H1 (cell line): ENCODE measurements at regions of chr6 and their contacts with region 1.

Region 1: DNA sequence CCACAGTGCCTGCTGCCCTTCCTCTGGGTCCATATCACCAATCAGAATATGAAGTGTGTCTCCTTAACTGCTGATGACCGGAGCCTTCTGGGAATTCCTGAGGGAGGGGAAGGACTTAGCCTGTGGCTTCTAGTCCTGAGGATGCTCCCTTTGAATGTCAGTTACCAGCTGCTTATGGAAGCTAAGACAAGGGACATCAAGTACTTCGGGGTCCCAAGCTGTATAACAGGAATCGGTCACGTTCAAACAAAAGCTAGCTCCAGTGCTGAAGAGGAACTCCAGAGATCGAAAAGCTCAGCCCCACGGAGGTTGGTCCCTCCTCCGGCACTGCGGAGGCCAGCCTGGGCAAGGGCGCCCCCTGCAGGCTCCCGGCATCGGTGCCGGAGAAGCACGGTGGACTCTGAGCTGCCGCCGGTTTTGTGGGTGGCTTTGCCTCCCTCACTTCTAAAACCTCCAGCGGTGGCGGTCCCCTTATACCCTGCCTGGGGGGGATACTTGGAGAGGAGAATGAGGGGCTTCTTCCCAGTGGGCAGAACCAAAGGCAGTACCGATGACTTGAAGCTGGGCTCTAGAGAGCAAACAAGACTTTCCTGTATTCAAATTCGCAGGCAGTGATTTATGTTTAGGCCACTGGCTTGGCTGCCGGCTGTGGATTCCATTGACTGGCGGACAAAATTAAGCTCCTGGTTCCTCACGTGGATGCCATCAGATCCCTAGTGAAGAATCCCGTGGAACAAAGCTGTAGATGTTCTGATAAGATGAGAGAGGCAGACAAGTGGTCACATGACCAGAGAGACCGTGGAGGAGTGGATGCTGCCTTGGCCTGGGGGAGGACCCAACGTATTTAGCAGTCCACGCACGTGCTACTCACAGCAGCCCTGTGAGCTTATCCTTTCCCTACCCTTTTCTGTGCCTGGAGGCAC is 16.2 kb upstream of the UBR2 start:
- DNase-seq: peak in 1 of 2 experiments; percentile 97
- H3K4me3 ChIP-seq: peak overlapping the region; percentile 32 to 58 (median 48); a peak in 7 of 8 replicates
- H3K27ac ChIP-seq: no peak overlapping the region
- H3K4me1 ChIP-seq: no peaks in the 10 kb centered on the region; a peak in 2 of 7 replicates
- H3K27me3 ChIP-seq: no peaks in the 10 kb centered on the region
- CTCF ChIP-seq: peak; percentile 95 to 98 (median 97)
- EP300 ChIP-seq: no peak
- POLR2A ChIP-seq: no peak
- RAD21 ChIP-seq: peak; percentile 95 to 97

Region 2: GRCh38 chr6:42260972-42261371 is 286.7 kb before region 1 on chr6:
- CTCF ChIA-PET with region 1: interaction called, 28 read pairs
- POLR2A ChIA-PET with region 1: no interaction called
- DNase-seq: peak in 1 of 2 experiments; percentile 86
- H3K4me3 ChIP-seq: no peak overlapping the region
- H3K27ac ChIP-seq: no peak overlapping the region
- H3K4me1 ChIP-seq: peaks cover 17 to 26% (median 20%) of the 10 kb centered on the region in 4 experiments
- H3K27me3 ChIP-seq: no peaks in the 10 kb centered on the region
- CTCF ChIP-seq: peak; percentile 51 to 79 (median 78)
- EP300 ChIP-seq: no peak
- POLR2A ChIP-seq: no peak
- RAD21 ChIP-seq: peak; percentile 66 to 69

Region 3: DNA sequence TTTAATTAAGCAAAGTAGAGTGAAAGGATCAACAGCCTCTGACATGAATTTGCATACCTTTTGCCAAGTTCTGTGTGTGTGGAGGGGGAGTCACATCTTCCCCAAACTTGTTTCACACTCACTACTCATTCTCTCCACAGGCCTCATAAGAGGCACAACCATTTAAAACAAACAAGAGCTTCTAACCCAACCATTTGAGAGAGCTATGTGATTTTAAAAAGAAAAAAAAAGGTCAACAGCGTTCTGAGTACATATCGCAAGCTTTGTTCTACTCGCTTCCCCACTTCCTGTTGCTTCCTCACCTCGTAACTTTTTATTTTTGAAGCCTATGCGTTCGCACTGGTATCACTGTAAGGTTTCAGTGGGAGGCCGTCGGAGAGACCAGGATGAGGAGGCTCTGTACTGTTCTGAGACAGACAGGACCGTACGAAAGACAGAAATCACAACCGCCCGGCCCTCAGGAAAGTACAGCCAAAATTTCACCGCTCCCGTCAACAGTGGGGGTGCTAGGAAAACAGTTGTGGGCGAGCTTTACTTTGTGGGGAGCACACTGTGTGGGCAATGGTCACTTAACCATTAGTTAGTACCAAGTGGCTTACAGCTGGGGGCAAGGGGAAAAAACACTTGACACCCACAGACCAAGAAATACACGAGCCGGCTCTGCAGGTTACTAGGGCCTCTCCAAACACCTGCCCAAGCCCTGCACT is 157.3 kb before region 1 on chr6:
- CTCF ChIA-PET with region 1: interaction called, 13 read pairs
- POLR2A ChIA-PET with region 1: no interaction called
- DNase-seq: no peak
- H3K4me3 ChIP-seq: no peak overlapping the region
- H3K27ac ChIP-seq: no peak overlapping the region
- H3K4me1 ChIP-seq: peaks cover 3 to 9% (median 8%) of the 10 kb centered on the region in 4 experiments; a peak in 5 of 7 replicates
- H3K27me3 ChIP-seq: no peaks in the 10 kb centered on the region
- CTCF ChIP-seq: no peak
- EP300 ChIP-seq: no peak
- POLR2A ChIP-seq: no peak
- RAD21 ChIP-seq: no peak

Region 4: GRCh38 chr6:42453031-42453653 is 94.5 kb before region 1 on chr6:
- CTCF ChIA-PET with region 1: interaction called, 23 read pairs
- POLR2A ChIA-PET with region 1: interaction called, 15 read pairs
- DNase-seq: peak in 1 of 2 experiments; percentile 91
- H3K4me3 ChIP-seq: peak overlapping the region; percentile 73 to 96 (median 94)
- H3K27ac ChIP-seq: peak overlapping the region; percentile 89; the same call in 1 of the 2 replicates
- H3K4me1 ChIP-seq: peaks cover 0 to 26% (median 14%) of the 10 kb centered on the region in 4 experiments; a peak in 6 of 7 replicates
- H3K27me3 ChIP-seq: no peaks in the 10 kb centered on the region; a peak in 1 of 7 replicates
- CTCF ChIP-seq: no peak
- EP300 ChIP-seq: peak in 1 of 2 experiments; percentile 1; a peak in 1 of 3 replicates
- POLR2A ChIP-seq: peak in 1 of 2 experiments; percentile 30; a peak in 2 of 3 replicates
- RAD21 ChIP-seq: 0 out of 4 replicates have a peak, but pooled peaks of 1 of the 2 experiments have one; percentile 15

Region 5: DNA sequence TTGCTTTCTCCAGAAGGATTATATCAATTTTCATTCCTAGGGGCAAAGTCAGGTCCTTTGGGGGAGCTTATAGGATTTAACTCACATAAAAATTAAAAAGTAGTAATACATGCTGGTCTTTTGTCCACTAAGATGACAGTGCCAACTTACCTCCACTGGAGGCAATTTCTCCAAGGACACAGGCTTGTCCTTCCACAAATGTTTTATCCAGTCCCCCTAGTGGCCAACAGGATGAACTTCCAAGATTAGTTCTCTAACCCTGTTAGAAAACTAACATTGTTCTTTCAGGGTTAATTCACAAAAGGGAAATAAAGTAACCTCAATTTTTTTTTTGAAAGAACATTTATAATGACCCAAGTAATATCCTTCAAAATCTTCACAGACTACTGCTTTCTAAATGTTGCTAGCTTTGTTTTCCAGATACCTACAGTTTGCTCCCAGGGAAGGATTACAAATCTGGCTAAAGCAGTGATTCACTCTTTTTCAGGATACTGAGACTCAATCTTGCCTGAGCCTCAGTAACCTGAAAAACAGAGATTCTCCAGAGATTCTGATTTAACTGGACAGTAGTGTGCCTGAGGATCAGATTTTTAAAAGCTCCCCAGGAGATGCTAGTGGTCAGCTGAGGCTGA is 15.5 kb before region 1 on chr6:
- CTCF ChIA-PET with region 1: interaction called, 88 read pairs
- POLR2A ChIA-PET with region 1: interaction called, 7 read pairs
- DNase-seq: no peak
- H3K4me3 ChIP-seq: no peak overlapping the region
- H3K27ac ChIP-seq: no peak overlapping the region
- H3K4me1 ChIP-seq: no peaks in the 10 kb centered on the region
- H3K27me3 ChIP-seq: no peaks in the 10 kb centered on the region
- CTCF ChIP-seq: peak in 2 of 3 experiments; percentile 75 to 93; a peak in 3 of 4 replicates
- EP300 ChIP-seq: no peak
- POLR2A ChIP-seq: no peak
- RAD21 ChIP-seq: peak; percentile 68 to 75

Region 6: DNA sequence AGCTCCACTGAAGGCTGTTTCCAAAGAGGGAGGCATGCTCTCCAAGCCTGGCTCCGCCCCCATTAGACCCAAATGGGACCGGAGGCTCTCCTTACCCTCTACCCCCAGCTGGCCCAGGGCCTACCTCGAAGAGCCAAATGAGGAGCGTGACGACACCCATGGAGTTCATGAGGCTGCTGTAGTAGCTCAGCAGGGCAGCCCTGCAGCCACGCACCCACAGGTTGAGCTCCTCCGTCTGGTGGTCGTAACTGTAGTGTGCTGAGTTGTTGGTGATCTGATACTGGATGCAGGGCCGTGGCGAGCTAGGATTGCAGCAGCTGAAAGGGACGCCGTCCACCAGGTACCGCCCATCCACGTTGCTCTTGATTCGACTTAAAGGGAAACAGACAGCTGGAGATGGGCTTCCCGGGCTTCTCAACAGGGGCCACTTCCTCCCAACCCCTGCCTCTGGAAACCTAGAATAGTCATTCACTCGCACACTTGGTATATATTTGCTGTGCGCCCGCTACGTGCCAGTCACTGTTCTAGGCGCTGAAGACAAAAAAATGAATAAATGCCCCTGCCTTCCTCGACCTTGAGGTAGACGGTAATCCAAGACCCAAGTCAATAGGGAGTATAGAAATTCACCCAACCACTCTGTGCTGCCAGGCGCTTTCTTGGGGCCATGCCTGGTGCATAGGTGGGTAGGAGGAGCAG is 156.7 kb after region 1 on chr6:
- CTCF ChIA-PET with region 1: no interaction called
- POLR2A ChIA-PET with region 1: no interaction called
- DNase-seq: peak in 1 of 2 experiments; percentile 57
- H3K4me3 ChIP-seq: peak overlapping the region in 2 of 4 experiments; percentile 2 to 43; a peak in 3 of 8 replicates
- H3K27ac ChIP-seq: no peak overlapping the region
- H3K4me1 ChIP-seq: peaks cover 0 to 6% (median 1%) of the 10 kb centered on the region in 4 experiments; a peak in 3 of 7 replicates
- H3K27me3 ChIP-seq: no peaks in the 10 kb centered on the region
- CTCF ChIP-seq: no peak
- EP300 ChIP-seq: no peak
- POLR2A ChIP-seq: peak in 1 of 2 experiments; percentile 63; a peak in 2 of 3 replicates
- RAD21 ChIP-seq: no peak

Region 7: GRCh38 chr6:42831237-42831636 is 283.6 kb after region 1 on chr6:
- CTCF ChIA-PET with region 1: no interaction called
- POLR2A ChIA-PET with region 1: no interaction called
- DNase-seq: no peak
- H3K4me3 ChIP-seq: no peak overlapping the region
- H3K27ac ChIP-seq: no peak overlapping the region
- H3K4me1 ChIP-seq: no peaks in the 10 kb centered on the region
- H3K27me3 ChIP-seq: no peaks in the 10 kb centered on the region
- CTCF ChIP-seq: no peak
- EP300 ChIP-seq: no peak
- POLR2A ChIP-seq: no peak
- RAD21 ChIP-seq: no peak